IMR-90 (cell line): ENCODE measurements at regions of chr12 and their contacts with region 1.

Region 1: DNA sequence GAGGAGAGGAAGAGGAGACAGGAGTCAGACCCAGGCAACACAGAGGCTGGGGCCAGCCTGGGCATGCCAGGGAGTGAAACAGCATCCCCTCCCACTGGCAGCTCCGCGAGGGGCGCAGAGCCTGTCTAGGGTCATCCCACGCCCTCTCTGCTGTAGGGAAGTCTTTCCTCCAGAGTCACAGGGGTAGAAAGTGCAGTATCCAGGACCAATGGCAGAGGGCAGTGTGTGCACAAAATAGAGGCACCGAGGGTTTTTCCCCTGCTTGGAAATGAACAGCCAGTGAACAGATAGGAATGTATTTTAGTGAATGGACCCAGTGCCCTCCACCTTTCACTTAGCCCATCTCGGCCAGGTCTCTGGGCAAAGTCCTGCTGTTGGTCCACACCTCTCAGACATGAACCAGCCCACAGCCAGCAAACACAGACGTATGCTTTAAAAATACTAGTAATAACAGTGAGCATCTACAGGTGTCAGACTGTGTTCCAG is 9.4 kb upstream of the KRT74 start:
- DNase-seq: peak; percentile 43
- ATAC-seq: peak; percentile 99
- H3K4me3 ChIP-seq: no peak overlapping the region
- H3K27ac ChIP-seq: no peak overlapping the region
- H3K4me1 ChIP-seq: no peaks in the 10 kb centered on the region
- H3K27me3 ChIP-seq: peaks cover 49% of the 10 kb centered on the region
- CTCF ChIP-seq: peak; percentile 85
- POLR2A ChIP-seq: no peak
- RAD21 ChIP-seq: peak; percentile 87

Region 2: GRCh38 chr12:52372216-52373154 is 210.5 kb before region 1 on chr12:
- CTCF ChIA-PET with region 1: no interaction called
- POLR2A ChIA-PET with region 1: no interaction called
- dilution Hi-C with region 1: no loop called
- in situ Hi-C with region 1: no loop called
- intact Hi-C with region 1: loop called (anchors 1 kb)
- DNase-seq: peak; percentile 81
- ATAC-seq: peak; percentile 94
- H3K4me3 ChIP-seq: no peak overlapping the region
- H3K27ac ChIP-seq: no peak overlapping the region
- H3K4me1 ChIP-seq: no peaks in the 10 kb centered on the region
- H3K27me3 ChIP-seq: peaks cover 36% of the 10 kb centered on the region
- CTCF ChIP-seq: peak; percentile 93
- POLR2A ChIP-seq: no peak
- RAD21 ChIP-seq: peak; percentile 92

Region 3: GRCh38 chr12:52634266-52635056 is 51.4 kb after region 1 on chr12:
- CTCF ChIA-PET with region 1: no interaction called
- POLR2A ChIA-PET with region 1: no interaction called
- dilution Hi-C with region 1: no loop called
- in situ Hi-C with region 1: no loop called
- intact Hi-C with region 1: no loop called
- DNase-seq: no peak
- ATAC-seq: no peak
- H3K4me3 ChIP-seq: no peak overlapping the region
- H3K27ac ChIP-seq: no peak overlapping the region
- H3K4me1 ChIP-seq: no peaks in the 10 kb centered on the region
- H3K27me3 ChIP-seq: peaks cover 11% of the 10 kb centered on the region
- CTCF ChIP-seq: no peak
- POLR2A ChIP-seq: no peak
- RAD21 ChIP-seq: no peak

Region 4: GRCh38 chr12:52865090-52865944 is 282.3 kb after region 1 on chr12:
- CTCF ChIA-PET with region 1: interaction called, 6 read pairs
- POLR2A ChIA-PET with region 1: no interaction called
- dilution Hi-C with region 1: no loop called
- in situ Hi-C with region 1: no loop called
- intact Hi-C with region 1: loop called (anchors 1 kb)
- DNase-seq: peak; percentile 60
- ATAC-seq: peak; percentile 96
- H3K4me3 ChIP-seq: no peak overlapping the region
- H3K27ac ChIP-seq: no peak overlapping the region
- H3K4me1 ChIP-seq: no peaks in the 10 kb centered on the region
- H3K27me3 ChIP-seq: peaks cover 6% of the 10 kb centered on the region
- CTCF ChIP-seq: peak; percentile 84
- POLR2A ChIP-seq: no peak
- RAD21 ChIP-seq: peak; percentile 89

Region 5: GRCh38 chr12:52870351-52871290 is 287.6 kb after region 1 on chr12:
- CTCF ChIA-PET with region 1: interaction called, 6 read pairs
- POLR2A ChIA-PET with region 1: no interaction called
- dilution Hi-C with region 1: no loop called
- in situ Hi-C with region 1: loop called (anchors 5 kb)
- intact Hi-C with region 1: loop called (anchors 1 kb)
- DNase-seq: peak; percentile 25
- ATAC-seq: peak; percentile 32
- H3K4me3 ChIP-seq: no peak overlapping the region
- H3K27ac ChIP-seq: peak overlapping the region; percentile 19; the same call in 1 of the 2 replicates
- H3K4me1 ChIP-seq: peaks cover 26% of the 10 kb centered on the region
- H3K27me3 ChIP-seq: no peaks in the 10 kb centered on the region
- CTCF ChIP-seq: peak; percentile 80
- POLR2A ChIP-seq: no peak
- RAD21 ChIP-seq: peak; percentile 91

Region 6: GRCh38 chr12:52879394-52880351 is 296.7 kb after region 1 on chr12:
- CTCF ChIA-PET with region 1: interaction called, 6 read pairs
- POLR2A ChIA-PET with region 1: no interaction called
- dilution Hi-C with region 1: no loop called
- in situ Hi-C with region 1: loop called (anchors 5 kb)
- intact Hi-C with region 1: loop called (anchors 1 kb)
- DNase-seq: peak; percentile 86
- ATAC-seq: peak; percentile 94
- H3K4me3 ChIP-seq: no peak overlapping the region
- H3K27ac ChIP-seq: no peak overlapping the region
- H3K4me1 ChIP-seq: peaks cover 3% of the 10 kb centered on the region
- H3K27me3 ChIP-seq: no peaks in the 10 kb centered on the region
- CTCF ChIP-seq: peak; percentile 98
- POLR2A ChIP-seq: peak; percentile 52
- RAD21 ChIP-seq: peak; percentile 97